Pancreas (tissue), 10 donors: ENCODE measurements at regions of chr21 and their contacts with region 1.

Region 1: DNA sequence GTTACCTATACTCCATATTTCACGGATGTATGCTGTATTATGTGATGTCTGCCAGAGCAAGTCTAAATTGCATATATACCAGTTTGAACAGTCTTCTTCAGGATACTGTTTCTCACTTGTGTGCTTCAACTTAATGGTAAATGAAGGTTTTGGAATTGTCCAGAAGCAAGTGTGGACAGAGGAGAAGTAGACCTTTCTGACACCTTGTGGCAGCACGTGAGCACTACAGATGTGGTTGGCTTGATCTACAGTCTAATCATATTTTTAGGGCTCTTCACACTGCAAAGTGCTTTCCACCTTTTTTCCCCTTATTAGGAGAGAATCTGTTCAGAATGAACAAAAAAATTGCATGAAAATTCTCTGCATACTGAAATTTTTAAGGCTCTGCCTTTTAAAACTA is 10.9 kb downstream of the MORC3 start:
- DNase-seq: peak in 2 of 6 donors; percentile 21 to 54
- ATAC-seq: peak; percentile 67 to 94 (median 90)
- H3K4me3 ChIP-seq: no peak overlapping the region
- H3K27ac ChIP-seq: no peak overlapping the region
- H3K4me1 ChIP-seq: peaks cover 9 to 15% (median 9%) of the 10 kb centered on the region in 3 donors
- H3K27me3 ChIP-seq: no peaks in the 10 kb centered on the region
- CTCF ChIP-seq: peak; percentile 44 to 60 (median 54)

Region 2: GRCh38 chr21:36135391-36136102 is 195.4 kb before region 1 on chr21:
- intact Hi-C with region 1: loop called in 2 of 3 experiments (anchors 5 to 10 kb)
- DNase-seq: peak in 3 of 6 donors; percentile 26 to 72 (median 42)
- ATAC-seq: peak; percentile 44 to 76 (median 74)
- H3K4me3 ChIP-seq: peak overlapping the region; percentile 27 to 61 (median 32)
- H3K27ac ChIP-seq: peak overlapping the region in 3 of 4 donors; percentile 34 to 63 (median 39)
- H3K4me1 ChIP-seq: peaks cover 0 to 8% (median 0%) of the 10 kb centered on the region in 3 donors
- H3K27me3 ChIP-seq: no peaks in the 10 kb centered on the region
- CTCF ChIP-seq: no peak

Region 3: DNA sequence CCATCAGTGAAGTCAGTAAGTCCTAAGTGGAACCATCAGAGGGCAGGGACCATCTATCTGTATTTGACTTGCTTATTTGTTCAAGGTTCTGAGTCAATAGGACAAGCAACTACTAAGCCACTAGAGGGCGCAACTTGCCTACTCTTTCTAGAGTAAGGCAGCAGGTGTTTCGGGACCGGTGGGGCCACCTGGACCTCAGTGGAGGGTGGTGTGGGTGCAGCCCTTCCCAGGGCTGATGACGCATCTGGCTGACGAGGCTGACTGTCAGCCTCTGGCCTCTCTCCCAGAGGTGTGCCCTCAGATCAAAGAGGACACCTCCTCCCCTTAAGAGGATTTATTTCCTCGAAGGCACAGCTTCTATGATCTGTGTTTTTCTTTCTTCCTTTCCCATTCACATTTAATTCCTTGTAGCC is 189.4 kb before region 1 on chr21:
- intact Hi-C with region 1: loop called in 2 of 3 experiments (anchors 5 to 10 kb)
- DNase-seq: peak; percentile 79 to 93 (median 92)
- ATAC-seq: peak; percentile 91 to 99 (median 98)
- H3K4me3 ChIP-seq: no peak overlapping the region
- H3K27ac ChIP-seq: peak overlapping the region in 1 of 4 donors; percentile 59
- H3K4me1 ChIP-seq: peaks cover 0 to 4% (median 0%) of the 10 kb centered on the region in 3 donors
- H3K27me3 ChIP-seq: no peaks in the 10 kb centered on the region
- CTCF ChIP-seq: peak; percentile 81 to 84 (median 81)

Region 4: GRCh38 chr21:36385233-36386030 is 54.5 kb after region 1 on chr21 and contains the start of gene CHAF1B:
- intact Hi-C with region 1: no loop called
- DNase-seq: peak; percentile 63 to 96 (median 90)
- ATAC-seq: peak; percentile 93 to 97 (median 96)
- H3K4me3 ChIP-seq: peak within 1 kb of the TSS; percentile 49 to 84 (median 69)
- H3K27ac ChIP-seq: peak within 1 kb of the TSS; percentile 55 to 69 (median 62)
- H3K4me1 ChIP-seq: no peaks in the 10 kb centered on the region
- H3K27me3 ChIP-seq: no peaks in the 10 kb centered on the region
- CTCF ChIP-seq: no peak
- total RNA-seq, gene CHAF1B: 1.5 to 3.3 (median 3.1) TPM